A673 (cell line): ENCODE measurements at regions of chr14 and their contacts with region 1.

Region 1: GRCh38 chr14:103456167-103456835 is 66.3 kb downstream of the CKB start:
- DNase-seq: peak; percentile 78
- H3K4me3 ChIP-seq: no peak overlapping the region
- H3K27ac ChIP-seq: no peak overlapping the region
- H3K4me1 ChIP-seq: peaks cover 15% of the 10 kb centered on the region
- H3K27me3 ChIP-seq: no peaks in the 10 kb centered on the region
- CTCF ChIP-seq: no peak

Region 2: GRCh38 chr14:103391048-103391447 is 65.3 kb before region 1 on chr14:
- CTCF ChIA-PET with region 1: no interaction called
- POLR2A ChIA-PET with region 1: no interaction called
- intact Hi-C with region 1: loop called (anchors 5 kb)
- DNase-seq: peak; percentile 74
- H3K4me3 ChIP-seq: no peak overlapping the region
- H3K27ac ChIP-seq: no peak overlapping the region
- H3K4me1 ChIP-seq: peaks cover 31% of the 10 kb centered on the region
- H3K27me3 ChIP-seq: no peaks in the 10 kb centered on the region
- CTCF ChIP-seq: peak; percentile 87